Caco-2 (cell line): ENCODE measurements at regions of chr15 and their contacts with region 1.

Region 1: GRCh38 chr15:56886932-56887781 is 31.3 kb upstream of the TCF12 start:
- DNase-seq: peak; percentile 93 to 95
- H3K4me3 ChIP-seq: peak overlapping the region; percentile 49
- H3K4me3 Mint-ChIP-seq: peak overlapping the region; percentile 82
- H3K27ac Mint-ChIP-seq: peak overlapping the region; percentile 44
- H3K4me1 ChIP-seq: no peaks in the 10 kb centered on the region; the same call in 1 of the 2 replicates
- H3K4me1 Mint-ChIP-seq: peaks cover 17% of the 10 kb centered on the region
- H3K27me3 ChIP-seq: no peaks in the 10 kb centered on the region
- H3K27me3 Mint-ChIP-seq: no peaks in the 10 kb centered on the region
- CTCF ChIP-seq: peak in 1 of 2 experiments; percentile 3

Region 2: GRCh38 chr15:56496635-56497034 is 390.5 kb before region 1 on chr15:
- CTCF ChIA-PET with region 1: no interaction called
- POLR2A ChIA-PET with region 1: no interaction called
- intact Hi-C with region 1: loop called (anchors 1 kb)
- DNase-seq: peak in 1 of 2 experiments; percentile 48
- H3K4me3 ChIP-seq: no peak overlapping the region
- H3K4me3 Mint-ChIP-seq: peak overlapping the region; percentile 30
- H3K27ac Mint-ChIP-seq: no peak overlapping the region
- H3K4me1 ChIP-seq: no peaks in the 10 kb centered on the region
- H3K4me1 Mint-ChIP-seq: peaks cover 7% of the 10 kb centered on the region
- H3K27me3 ChIP-seq: no peaks in the 10 kb centered on the region
- H3K27me3 Mint-ChIP-seq: peaks cover 17% of the 10 kb centered on the region
- CTCF ChIP-seq: peak; percentile 52 to 62

Region 3: GRCh38 chr15:56732921-56733797 is 154.0 kb before region 1 on chr15 and contains the start of gene ZNF280D:
- CTCF ChIA-PET with region 1: no interaction called
- POLR2A ChIA-PET with region 1: no interaction called
- intact Hi-C with region 1: loop called (anchors 1 kb)
- DNase-seq: peak; percentile 89
- H3K4me3 ChIP-seq: peak within 1 kb of the TSS; percentile 76
- H3K4me3 Mint-ChIP-seq: peak within 1 kb of the TSS; percentile 100
- H3K27ac Mint-ChIP-seq: peak within 1 kb of the TSS; percentile 99
- H3K4me1 ChIP-seq: peaks cover 16% of the 10 kb centered on the region
- H3K4me1 Mint-ChIP-seq: no peaks in the 10 kb centered on the region
- H3K27me3 ChIP-seq: no peaks in the 10 kb centered on the region
- H3K27me3 Mint-ChIP-seq: no peaks in the 10 kb centered on the region
- CTCF ChIP-seq: no peak
- total RNA-seq, gene ZNF280D: 28.7 and 31.0 TPM in 2 replicates

Region 4: GRCh38 chr15:56869573-56869972 is 17.6 kb before region 1 on chr15:
- CTCF ChIA-PET with region 1: no interaction called
- POLR2A ChIA-PET with region 1: no interaction called
- intact Hi-C with region 1: no loop called
- DNase-seq: peak; percentile 31 to 35
- H3K4me3 ChIP-seq: no peak overlapping the region
- H3K4me3 Mint-ChIP-seq: no peak overlapping the region
- H3K27ac Mint-ChIP-seq: no peak overlapping the region
- H3K4me1 ChIP-seq: no peaks in the 10 kb centered on the region
- H3K4me1 Mint-ChIP-seq: peaks cover 7% of the 10 kb centered on the region
- H3K27me3 ChIP-seq: no peaks in the 10 kb centered on the region
- H3K27me3 Mint-ChIP-seq: no peaks in the 10 kb centered on the region
- CTCF ChIP-seq: no peak

Region 5: DNA sequence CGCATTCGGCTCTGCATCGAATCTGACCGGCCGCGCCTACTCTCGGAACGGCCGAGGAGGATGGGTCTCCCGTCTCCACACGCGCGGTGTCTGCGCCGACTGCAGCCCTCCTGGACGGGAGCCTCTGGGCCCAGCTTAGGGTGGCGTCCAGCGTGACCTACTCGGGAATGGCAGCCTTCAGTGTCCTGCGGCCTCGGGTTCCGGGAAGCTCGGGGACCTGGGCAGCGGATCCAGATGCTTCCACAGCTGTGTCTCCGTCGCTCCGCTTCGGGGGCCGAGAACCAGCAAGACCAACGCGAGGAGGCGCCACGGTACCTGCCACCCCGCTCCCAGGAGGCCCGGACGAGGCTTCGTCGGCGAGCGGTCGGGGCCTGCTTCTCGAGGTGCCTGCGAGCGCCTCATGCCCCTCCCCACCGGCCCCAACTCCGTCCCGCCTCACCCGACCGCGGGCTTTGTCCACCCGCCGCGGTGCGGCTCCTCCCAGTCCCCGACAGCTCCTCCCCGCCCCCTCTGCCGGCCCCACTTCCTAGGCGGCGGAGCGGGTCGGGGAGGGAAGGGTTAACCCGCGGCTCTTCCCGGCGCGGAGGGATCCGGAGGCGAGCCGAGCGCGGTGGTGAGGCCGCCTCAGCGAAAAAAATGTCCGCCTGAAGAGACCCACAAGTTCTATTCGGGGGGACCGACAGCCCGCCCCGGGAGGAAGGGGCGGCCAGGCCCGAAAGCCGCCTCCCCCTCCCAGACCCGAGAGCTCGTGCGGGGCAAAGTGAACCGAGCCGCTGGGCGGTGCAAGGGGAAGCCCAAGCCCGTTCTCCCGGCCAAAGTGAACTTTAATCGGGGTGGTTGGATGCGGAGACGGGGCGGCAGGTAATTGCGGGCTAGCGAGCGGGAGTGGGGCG is 31.1 kb after region 1 on chr15 and contains the start of gene TCF12:
- CTCF ChIA-PET with region 1: interaction called, 10 read pairs
- POLR2A ChIA-PET with region 1: interaction called, 16 read pairs
- intact Hi-C with region 1: loop called (anchors 1 kb)
- DNase-seq: peak; percentile 96 to 98
- H3K4me3 ChIP-seq: peak within 1 kb of the TSS; percentile 92
- H3K4me3 Mint-ChIP-seq: peak within 1 kb of the TSS; percentile 99
- H3K27ac Mint-ChIP-seq: peak within 1 kb of the TSS; percentile 97
- H3K4me1 ChIP-seq: peaks cover 19% of the 10 kb centered on the region
- H3K4me1 Mint-ChIP-seq: peaks cover 3% of the 10 kb centered on the region
- H3K27me3 ChIP-seq: no peaks in the 10 kb centered on the region
- H3K27me3 Mint-ChIP-seq: no peaks in the 10 kb centered on the region
- CTCF ChIP-seq: peak; percentile 37 to 45
- total RNA-seq, gene TCF12: 64.4 and 68.8 TPM in 2 replicates